Activated T-helper 1 cell treated with anti-CD3 and anti-CD28 coated beads, Interleukin-12 subunit alpha, Interleukin-12 subunit beta, Interleukin-2, Interleukin-4 antibody, amounts not matched to agents 30 ng/mL and 10 ng/mL and 1 ng/mL, durations not matched to agents 14 hours and 24 hours and 36 hours (primary cell): ENCODE measurements at regions of chr5 and their contacts with region 1.

Region 1: DNA sequence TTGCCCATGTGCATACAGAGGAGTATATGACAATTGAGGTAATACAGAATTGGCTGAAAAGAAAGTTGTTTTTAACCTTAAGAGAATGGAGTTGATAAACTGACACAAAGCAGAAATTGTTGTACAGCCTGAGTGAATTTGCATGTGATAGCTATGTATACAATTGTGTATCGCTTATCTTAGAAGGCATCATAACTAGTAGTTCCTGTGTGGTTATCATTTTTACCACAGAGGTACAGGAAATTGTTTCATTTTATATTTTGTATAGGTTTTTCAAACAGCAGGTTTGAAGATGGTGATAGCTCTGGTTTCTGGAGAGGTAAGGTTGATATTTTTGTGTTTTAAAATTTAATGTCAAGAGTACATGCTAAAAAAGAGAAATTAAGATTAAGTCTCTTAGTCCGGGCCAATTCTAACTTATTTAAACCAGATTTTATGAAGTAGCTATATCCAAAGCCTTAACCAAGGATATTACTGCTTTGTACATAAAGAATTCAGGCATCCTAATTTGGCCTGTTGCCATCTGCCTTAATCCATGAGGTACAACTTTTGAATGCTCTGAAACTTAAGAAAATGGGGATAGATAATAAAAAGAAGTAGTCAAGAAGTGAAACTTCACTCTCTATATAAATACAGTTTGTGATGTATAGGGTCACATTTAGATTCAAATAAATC is 26.0 kb downstream of the DDX4 start:
- DNase-seq: no peak
- H3K4me3 Mint-ChIP-seq: peak overlapping the region; percentile 64
- H3K27ac Mint-ChIP-seq: peak overlapping the region; percentile 61
- H3K4me1 Mint-ChIP-seq: peaks cover 36% of the 10 kb centered on the region
- H3K27me3 Mint-ChIP-seq: peaks cover 3% of the 10 kb centered on the region

Region 2: GRCh38 chr5:55777332-55777731 is 13.4 kb after region 1 on chr5:
- intact Hi-C with region 1: loop called (anchors 2 kb)
- DNase-seq: no peak
- H3K4me3 Mint-ChIP-seq: no peak overlapping the region
- H3K27ac Mint-ChIP-seq: no peak overlapping the region
- H3K4me1 Mint-ChIP-seq: peaks cover 9% of the 10 kb centered on the region
- H3K27me3 Mint-ChIP-seq: peaks cover 15% of the 10 kb centered on the region